ENCODE measurements at regions of chr11 and their contacts with region 1.

Region 1: GRCh38 chr11:130916238-130916855 is at the start of gene SNX19:
- DNase-seq: peak; percentile 93
- H3K4me3 Mint-ChIP-seq: peak within 1 kb of the TSS; percentile 80
- H3K27ac Mint-ChIP-seq: peak within 1 kb of the TSS; percentile 68
- H3K4me1 Mint-ChIP-seq: peaks cover 42% of the 10 kb centered on the region
- H3K27me3 Mint-ChIP-seq: peaks cover 10% of the 10 kb centered on the region
- total RNA-seq, gene SNX19: 38.0 to 41.8 TPM

Region 2: DNA sequence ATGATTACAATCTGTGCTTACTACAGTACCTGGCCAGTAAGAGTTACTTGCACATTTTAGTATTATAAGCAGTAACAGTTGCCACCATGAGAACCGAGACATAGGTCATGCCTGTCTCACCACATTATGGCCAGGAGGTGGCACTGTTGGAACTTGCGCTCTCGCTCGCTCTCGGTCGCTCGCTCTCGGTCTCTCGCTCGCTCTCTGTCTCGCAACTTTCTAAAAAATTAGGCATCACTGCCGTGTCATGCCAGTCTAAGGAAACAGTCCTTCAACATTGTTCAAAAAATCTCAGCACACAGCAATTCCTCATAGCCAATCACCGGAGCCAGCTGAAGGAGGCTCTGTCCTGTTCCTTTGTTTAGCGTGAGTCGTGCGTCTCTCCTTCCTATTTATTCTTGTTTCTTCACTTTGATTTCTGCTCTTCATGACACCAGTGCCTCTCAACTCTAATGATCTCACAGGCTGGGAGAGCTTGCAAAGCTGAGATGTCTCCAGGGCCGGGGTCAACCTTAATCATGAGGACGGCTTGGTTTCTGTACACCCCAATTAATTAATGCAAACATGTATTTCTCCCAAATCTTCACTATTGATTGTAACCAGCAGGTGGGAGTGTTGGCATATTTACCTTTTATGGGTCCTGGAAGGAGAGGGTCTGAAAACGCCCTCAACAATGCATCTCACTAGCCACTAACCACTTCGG is 481.7 kb before region 1 on chr11:
- CTCF ChIA-PET with region 1: interaction called, 15 read pairs
- POLR2A ChIA-PET with region 1: no interaction called
- DNase-seq: peak; percentile 74
- H3K4me3 Mint-ChIP-seq: no peak overlapping the region
- H3K27ac Mint-ChIP-seq: no peak overlapping the region
- H3K4me1 Mint-ChIP-seq: peaks cover 25% of the 10 kb centered on the region
- H3K27me3 Mint-ChIP-seq: peaks cover 33% of the 10 kb centered on the region

Region 3: DNA sequence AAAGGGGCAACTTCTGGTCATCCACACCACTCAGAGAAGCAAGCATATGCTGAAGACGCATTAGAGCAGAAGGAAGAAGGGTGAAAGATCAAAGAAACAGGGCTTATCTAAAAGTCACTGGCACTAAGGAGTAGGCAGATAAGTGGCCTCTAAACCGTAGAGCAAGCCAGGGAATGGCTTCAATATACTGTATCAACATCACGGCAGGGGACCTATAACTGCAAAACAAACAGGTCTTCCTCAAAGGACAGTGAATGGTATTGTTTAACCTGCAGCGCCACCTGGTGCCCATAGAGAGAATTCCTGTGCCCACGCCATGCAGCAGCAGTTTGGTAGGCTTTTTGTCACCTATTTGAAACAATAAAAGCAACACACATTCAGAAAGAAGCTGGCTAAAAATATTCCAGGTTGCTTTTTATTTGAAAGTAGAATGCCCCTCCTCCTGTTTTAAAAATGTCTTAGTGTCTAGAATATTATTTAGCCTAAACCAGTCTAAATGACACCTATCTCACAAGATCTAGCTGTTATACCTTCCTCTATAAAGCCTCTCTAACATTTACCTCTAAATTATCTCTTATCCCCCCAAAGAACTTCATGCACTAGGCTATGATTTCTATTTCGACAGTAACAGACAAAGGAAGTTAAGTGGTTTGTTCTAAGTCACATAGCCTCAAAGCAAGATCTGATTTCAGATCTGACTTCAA is 21.9 kb before region 1 on chr11:
- CTCF ChIA-PET with region 1: interaction called, 69 read pairs
- POLR2A ChIA-PET with region 1: interaction called, 6 read pairs
- DNase-seq: peak; percentile 72
- H3K4me3 Mint-ChIP-seq: no peak overlapping the region
- H3K27ac Mint-ChIP-seq: no peak overlapping the region
- H3K4me1 Mint-ChIP-seq: no peaks in the 10 kb centered on the region
- H3K27me3 Mint-ChIP-seq: no peaks in the 10 kb centered on the region

Region 4: DNA sequence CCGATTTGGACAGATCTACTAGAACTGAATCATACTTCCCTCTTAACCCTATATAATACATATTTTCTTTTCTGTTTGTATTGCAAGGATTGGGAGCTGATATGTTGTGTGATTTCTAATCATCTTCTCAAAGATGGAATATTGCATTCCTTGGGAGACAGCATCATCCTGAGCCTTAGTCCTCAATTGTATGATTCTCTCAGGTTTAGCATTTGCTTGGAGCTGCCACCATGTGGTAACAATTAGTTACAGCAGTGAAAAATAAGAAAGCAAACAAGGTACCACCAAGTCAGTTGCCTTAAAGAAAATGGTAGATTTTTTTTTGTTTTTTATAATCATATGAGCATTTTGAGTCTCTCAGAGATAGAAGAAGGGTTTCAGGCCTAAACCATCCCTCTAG is 12.0 kb before region 1 on chr11:
- CTCF ChIA-PET with region 1: interaction called, 69 read pairs
- POLR2A ChIA-PET with region 1: interaction called, 10 read pairs
- DNase-seq: no peak
- H3K4me3 Mint-ChIP-seq: no peak overlapping the region
- H3K27ac Mint-ChIP-seq: no peak overlapping the region
- H3K4me1 Mint-ChIP-seq: peaks cover 3% of the 10 kb centered on the region
- H3K27me3 Mint-ChIP-seq: no peaks in the 10 kb centered on the region

Region 5: GRCh38 chr11:130932086-130932712 is 15.9 kb after region 1 on chr11:
- CTCF ChIA-PET with region 1: interaction called, 10 read pairs
- POLR2A ChIA-PET with region 1: no interaction called
- DNase-seq: no peak
- H3K4me3 Mint-ChIP-seq: no peak overlapping the region
- H3K27ac Mint-ChIP-seq: no peak overlapping the region
- H3K4me1 Mint-ChIP-seq: no peaks in the 10 kb centered on the region
- H3K27me3 Mint-ChIP-seq: no peaks in the 10 kb centered on the region